ENCODE measurements at regions of chr20 and their contacts with region 1.

Region 1: DNA sequence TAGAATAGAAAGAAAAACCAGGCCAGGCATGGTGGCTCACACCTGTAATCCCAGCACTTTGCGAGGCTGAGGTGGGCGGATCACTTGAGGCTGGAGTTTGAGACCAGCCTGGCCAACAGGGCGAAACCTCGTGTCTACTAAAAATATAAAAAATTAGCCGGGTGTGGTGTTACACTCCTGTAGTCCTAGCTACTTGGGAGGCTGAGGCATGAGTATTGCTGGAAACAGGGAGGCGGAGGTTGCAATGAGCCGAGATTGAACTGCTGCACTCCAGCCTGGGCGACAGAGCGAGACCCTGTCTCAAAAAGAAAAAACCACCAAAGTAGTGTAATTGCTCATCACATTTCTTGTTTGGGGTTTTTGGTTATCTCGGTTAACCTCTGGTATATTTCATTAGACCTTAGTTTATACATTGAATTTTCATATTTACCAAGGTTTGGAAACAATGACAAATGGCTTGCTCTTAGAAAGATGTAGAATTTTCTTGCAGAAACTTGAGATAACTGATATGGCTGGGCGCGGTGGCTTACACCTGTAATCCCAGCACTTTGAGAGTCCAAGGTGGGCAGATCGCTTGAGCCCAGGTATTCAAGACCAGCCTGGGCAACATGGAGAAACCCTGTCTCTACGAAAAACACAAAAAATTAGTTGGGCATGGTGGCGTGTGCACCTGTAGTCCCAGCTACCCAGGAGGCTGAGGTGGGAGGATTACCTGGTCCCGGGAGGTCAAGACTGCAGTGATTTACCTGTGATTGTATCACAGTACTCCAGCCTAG is 14.2 kb downstream of the ITCH start:
- DNase-seq: no peak
- ATAC-seq: no peak
- H3K4me3 ChIP-seq: no peak overlapping the region
- H3K27ac ChIP-seq: no peak overlapping the region
- H3K4me1 ChIP-seq: peaks cover 21% of the 10 kb centered on the region
- CTCF ChIP-seq: no peak
- EP300 ChIP-seq: no peak
- POLR2A ChIP-seq: no peak
- RAD21 ChIP-seq: no peak

Region 2: GRCh38 chr20:34285450-34285849 is 91.8 kb before region 1 on chr20:
- CTCF ChIA-PET with region 1: no interaction called
- POLR2A ChIA-PET with region 1: interaction called, 10 read pairs
- DNase-seq: no peak
- ATAC-seq: no peak
- H3K4me3 ChIP-seq: no peak overlapping the region
- H3K27ac ChIP-seq: no peak overlapping the region
- H3K4me1 ChIP-seq: no peaks in the 10 kb centered on the region
- CTCF ChIP-seq: no peak
- EP300 ChIP-seq: no peak
- POLR2A ChIP-seq: no peak
- RAD21 ChIP-seq: no peak